K562 (cell line): ENCODE measurements at regions of chr13 and their contacts with region 1.

Region 1: GRCh38 chr13:94549232-94550061 is 46.5 kb downstream of the TGDS start:
- DNase-seq: peak; percentile 81 to 93 (median 86)
- ATAC-seq: peak; percentile 98
- H3K4me3 ChIP-seq: peak overlapping the region; percentile 67
- H3K27ac ChIP-seq: peak overlapping the region; percentile 77
- H3K4me1 ChIP-seq: peaks cover 2 to 12% of the 10 kb centered on the region in 2 experiments; a peak in 3 of 5 replicates
- H3K27me3 ChIP-seq: no peaks in the 10 kb centered on the region
- CTCF ChIP-seq: 0 out of 6 replicates have a peak, but pooled peaks of 1 of the 3 experiments have one; percentile 0
- EP300 ChIP-seq: peak; percentile 63
- POLR2A ChIP-seq: peak; percentile 61
- RAD21 ChIP-seq: no peak

Region 2: DNA sequence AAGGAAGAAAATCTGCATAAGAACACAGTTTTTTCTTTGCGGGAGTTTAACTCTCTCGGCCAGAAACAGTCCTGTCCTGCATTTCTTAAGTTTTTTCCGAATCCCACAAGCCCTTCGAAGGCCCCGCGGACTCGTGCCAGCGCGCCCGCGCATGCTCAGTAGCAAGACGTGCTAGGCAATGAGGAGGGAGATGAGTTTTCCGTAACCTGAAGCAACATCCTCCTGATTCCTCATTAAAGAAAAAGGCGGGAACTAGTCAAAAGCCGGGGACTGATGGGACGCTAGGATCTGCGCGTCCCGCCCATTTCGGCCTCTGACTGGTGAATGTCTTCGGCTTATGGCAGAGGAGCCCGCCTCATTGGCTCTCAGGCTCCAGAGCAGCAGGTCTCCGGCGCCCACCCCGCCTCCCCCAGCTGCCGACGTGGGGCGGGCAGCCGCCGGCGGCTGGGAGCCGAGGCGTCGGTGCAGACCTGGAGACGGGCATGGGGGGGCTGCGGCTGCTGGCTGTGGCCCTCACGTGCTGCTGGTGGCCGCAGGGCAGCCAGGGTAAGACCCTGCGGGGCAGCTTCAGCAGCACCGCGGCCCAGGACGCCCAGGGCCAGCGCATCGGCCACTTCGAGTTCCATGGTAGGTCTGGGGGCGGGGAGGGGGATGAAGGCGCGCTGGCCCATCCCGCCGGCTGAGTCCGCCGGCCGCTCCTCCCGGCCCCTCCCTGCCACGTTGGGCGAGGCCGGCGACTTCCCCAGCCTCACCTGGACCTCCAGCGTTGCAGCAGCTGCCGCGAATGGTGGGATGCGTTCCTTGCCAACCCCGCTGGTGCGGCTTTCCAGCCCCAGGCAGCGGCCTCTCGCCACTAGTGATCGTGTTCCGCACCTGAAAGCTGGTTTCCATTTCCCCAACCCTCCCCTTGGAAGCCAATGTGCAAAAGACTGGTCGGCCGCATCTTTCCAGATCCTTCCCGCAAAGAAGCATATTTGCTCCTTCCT is 52.3 kb after region 1 on chr13 and contains the start of gene GPR180:
- CTCF ChIA-PET with region 1: no interaction called
- POLR2A ChIA-PET with region 1: no interaction called
- in situ Hi-C with region 1: no loop called
- intact Hi-C with region 1: loop called (anchors 1 kb)
- DNase-seq: peak; percentile 83 to 97 (median 89)
- ATAC-seq: peak; percentile 98
- H3K4me3 ChIP-seq: peak within 1 kb of the TSS; percentile 73
- H3K27ac ChIP-seq: peak within 1 kb of the TSS; percentile 62
- H3K4me1 ChIP-seq: peaks cover 2 to 10% of the 10 kb centered on the region in 2 experiments; a peak in 3 of 5 replicates
- H3K27me3 ChIP-seq: no peaks in the 10 kb centered on the region
- CTCF ChIP-seq: no peak
- EP300 ChIP-seq: no peak
- POLR2A ChIP-seq: peak; percentile 77
- RAD21 ChIP-seq: no peak
- polyA plus RNA-seq, gene GPR180: 0.77 to 0.82 TPM

Region 3: DNA sequence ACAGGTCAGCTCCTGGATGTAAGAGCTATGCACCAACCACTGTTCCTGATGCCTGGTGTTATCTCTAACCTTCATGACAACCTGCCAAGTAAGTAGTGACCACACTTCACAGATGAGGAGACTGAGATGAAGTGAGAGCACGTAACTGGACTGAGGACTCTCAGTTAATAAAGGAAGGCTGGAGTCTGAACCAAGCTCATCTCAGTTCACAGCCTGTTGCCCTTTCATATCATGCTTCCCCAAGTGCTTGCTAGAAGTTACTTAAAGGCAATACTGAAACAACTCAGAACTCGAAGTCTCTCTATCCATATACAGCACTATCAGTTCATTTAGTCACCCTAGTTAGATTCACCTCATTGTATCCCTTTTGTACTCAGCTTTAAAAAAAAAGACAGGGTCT is 632.1 kb after region 1 on chr13:
- CTCF ChIA-PET with region 1: no interaction called
- POLR2A ChIA-PET with region 1: no interaction called
- in situ Hi-C with region 1: no loop called
- intact Hi-C with region 1: no loop called
- DNase-seq: peak in 1 of 4 experiments; percentile 37
- ATAC-seq: peak; percentile 70
- H3K4me3 ChIP-seq: no peak overlapping the region
- H3K27ac ChIP-seq: no peak overlapping the region
- H3K4me1 ChIP-seq: no peaks in the 10 kb centered on the region; a peak in 2 of 5 replicates
- H3K27me3 ChIP-seq: no peaks in the 10 kb centered on the region
- CTCF ChIP-seq: no peak
- EP300 ChIP-seq: no peak
- POLR2A ChIP-seq: no peak
- RAD21 ChIP-seq: no peak